ENCODE measurements at regions of chr12 and their contacts with region 1.

Region 1: GRCh38 chr12:120820885-120821510 is 83.2 kb downstream of the SPPL3 start:
- DNase-seq: peak; percentile 7
- H3K4me3 Mint-ChIP-seq: no peak overlapping the region
- H3K27ac Mint-ChIP-seq: peak overlapping the region; percentile 79
- H3K4me1 Mint-ChIP-seq: peaks cover 30% of the 10 kb centered on the region
- H3K27me3 Mint-ChIP-seq: no peaks in the 10 kb centered on the region

Region 2: DNA sequence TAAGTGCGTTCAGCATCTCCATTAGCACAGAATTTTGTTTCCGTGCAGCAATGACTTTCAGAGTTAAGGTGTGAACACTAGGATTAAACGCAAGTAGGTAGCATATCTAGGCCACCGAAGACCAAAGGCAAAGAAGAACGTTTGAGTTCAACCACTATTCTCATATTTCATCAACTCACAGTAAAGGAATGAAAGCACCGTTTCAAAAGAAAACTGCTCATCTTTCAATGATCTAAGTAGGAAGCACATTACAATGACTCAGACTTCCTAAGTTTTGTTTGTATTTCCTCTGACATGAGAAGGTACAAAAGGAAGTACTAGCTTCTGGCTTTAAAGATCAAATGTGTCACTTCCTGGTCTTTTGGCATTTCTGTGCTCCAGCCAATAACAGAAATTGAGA is 37.8 kb before region 1 on chr12:
- intact Hi-C with region 1: loop called (anchors 2 kb)
- DNase-seq: no peak
- H3K4me3 Mint-ChIP-seq: no peak overlapping the region
- H3K27ac Mint-ChIP-seq: peak overlapping the region; percentile 15
- H3K4me1 Mint-ChIP-seq: peaks cover 15% of the 10 kb centered on the region
- H3K27me3 Mint-ChIP-seq: no peaks in the 10 kb centered on the region

Region 3: GRCh38 chr12:120797677-120798642 is 23.0 kb before region 1 on chr12:
- intact Hi-C with region 1: loop called (anchors 1 kb)
- DNase-seq: no peak
- H3K4me3 Mint-ChIP-seq: no peak overlapping the region
- H3K27ac Mint-ChIP-seq: peak overlapping the region; percentile 42
- H3K4me1 Mint-ChIP-seq: peaks cover 45% of the 10 kb centered on the region
- H3K27me3 Mint-ChIP-seq: no peaks in the 10 kb centered on the region

Measured in activated T-helper 1 cell treated with anti-CD3 and anti-CD28 coated beads, Interleukin-12 subunit alpha, Interleukin-12 subunit beta, Interleukin-2, Interleukin-4 antibody, amounts not matched to agents 30 ng/mL and 10 ng/mL and 1 ng/mL, durations not matched to agents 14 hours and 24 hours and 36 hours (primary cell).